ENCODE measurements at regions of chr1 and their contacts with region 1.

Region 1: GRCh38 chr1:146012737-146013403 is 8.7 kb downstream of the HJV start:
- DNase-seq: peak; percentile 39 to 87
- H3K4me3 ChIP-seq: no peak overlapping the region
- H3K27ac ChIP-seq: no peak overlapping the region
- H3K4me1 ChIP-seq: peaks cover 4 to 24% (median 13%) of the 10 kb centered on the region in 4 donors
- H3K27me3 ChIP-seq: peaks cover 0 to 7% (median 0%) of the 10 kb centered on the region in 3 donors
- CTCF ChIP-seq: peak in 5 of 7 experiments; percentile 44 to 76 (median 66)
- EP300 ChIP-seq: no peak
- POLR2A ChIP-seq: no peak

Region 2: GRCh38 chr1:145891587-145892485 is 121.0 kb before region 1 on chr1:
- intact Hi-C with region 1: no loop called
- DNase-seq: peak; percentile 97 to 98
- H3K4me3 ChIP-seq: peak overlapping the region in 1 of 4 donors; percentile 9
- H3K27ac ChIP-seq: peak overlapping the region; percentile 88 to 97 (median 96)
- H3K4me1 ChIP-seq: peaks cover 37 to 53% (median 41%) of the 10 kb centered on the region in 4 donors
- H3K27me3 ChIP-seq: no peaks in the 10 kb centered on the region
- CTCF ChIP-seq: peak in 6 of 7 experiments; percentile 81 to 99 (median 94)
- EP300 ChIP-seq: no peak
- POLR2A ChIP-seq: no peak

Region 3: GRCh38 chr1:145906954-145907753 is 105.7 kb before region 1 on chr1:
- intact Hi-C with region 1: loop called (anchors 10 kb)
- DNase-seq: no peak
- H3K4me3 ChIP-seq: no peak overlapping the region
- H3K27ac ChIP-seq: peak overlapping the region in 1 of 5 donors; percentile 10
- H3K4me1 ChIP-seq: peaks cover 5 to 8% (median 7%) of the 10 kb centered on the region in 4 donors
- H3K27me3 ChIP-seq: no peaks in the 10 kb centered on the region
- CTCF ChIP-seq: no peak
- EP300 ChIP-seq: no peak
- POLR2A ChIP-seq: no peak

Region 4: DNA sequence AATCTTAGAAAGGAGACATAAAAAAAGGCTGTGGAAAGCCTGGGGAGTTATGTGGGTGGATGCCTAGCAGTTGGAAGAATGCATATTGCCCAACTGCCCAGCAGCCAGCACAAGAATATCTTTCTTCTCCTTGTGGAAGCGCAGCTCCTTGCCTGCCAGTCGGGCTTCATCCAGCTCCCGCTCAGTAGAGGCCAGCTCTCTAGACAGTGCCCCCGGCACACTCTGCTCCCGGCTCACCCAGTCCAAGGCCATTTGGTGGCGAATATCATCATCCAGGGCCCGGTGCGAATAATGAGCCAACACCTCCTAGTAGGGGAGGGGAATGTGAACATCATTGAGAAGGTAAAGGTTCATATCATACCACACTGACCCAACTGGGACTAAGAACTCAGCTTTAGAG is 76.6 kb before region 1 on chr1:
- intact Hi-C with region 1: no loop called
- DNase-seq: no peak
- H3K4me3 ChIP-seq: no peak overlapping the region
- H3K27ac ChIP-seq: no peak overlapping the region
- H3K4me1 ChIP-seq: peaks cover 0 to 27% (median 7%) of the 10 kb centered on the region in 4 donors
- H3K27me3 ChIP-seq: no peaks in the 10 kb centered on the region
- CTCF ChIP-seq: no peak
- EP300 ChIP-seq: no peak
- POLR2A ChIP-seq: no peak

Region 5: GRCh38 chr1:145957443-145958319 is 55.2 kb before region 1 on chr1 and contains the start of gene LIX1L:
- intact Hi-C with region 1: no loop called
- DNase-seq: peak; percentile 96 to 99
- H3K4me3 ChIP-seq: peak within 1 kb of the TSS; percentile 82 to 96 (median 92)
- H3K27ac ChIP-seq: peak within 1 kb of the TSS; percentile 86 to 99 (median 94)
- H3K4me1 ChIP-seq: peaks cover 29 to 84% (median 71%) of the 10 kb centered on the region in 4 donors
- H3K27me3 ChIP-seq: peaks cover 0 to 14% (median 8%) of the 10 kb centered on the region in 3 donors
- CTCF ChIP-seq: peak in 1 of 7 experiments; percentile 7
- EP300 ChIP-seq: peak; percentile 45
- POLR2A ChIP-seq: peak in 2 of 4 donors; percentile 34 to 54
- total RNA-seq, gene LIX1L: 5.8 to 28.4 (median 14.0) TPM

Region 6: DNA sequence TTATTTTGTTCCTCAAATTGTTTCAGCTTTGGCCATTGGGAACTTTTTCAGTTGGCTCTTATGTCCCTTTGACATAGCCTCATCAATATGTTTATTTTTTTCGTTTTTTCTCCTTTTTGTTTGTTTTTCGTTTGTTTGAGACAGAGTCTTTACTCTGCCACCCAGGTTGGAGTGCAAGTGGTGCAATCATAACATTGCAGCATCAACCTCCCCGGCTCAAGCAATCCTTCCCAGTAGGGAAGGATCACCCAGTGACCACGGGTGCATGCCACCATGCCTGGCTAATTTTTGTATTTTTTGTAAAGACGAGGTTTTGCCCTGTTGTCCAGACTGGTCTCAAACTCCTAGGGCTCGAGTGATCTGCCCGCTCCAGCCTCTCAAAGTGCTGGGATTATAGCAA is 40.3 kb before region 1 on chr1:
- intact Hi-C with region 1: loop called (anchors 5 kb)
- DNase-seq: no peak
- H3K4me3 ChIP-seq: no peak overlapping the region
- H3K27ac ChIP-seq: no peak overlapping the region
- H3K4me1 ChIP-seq: peaks cover 5 to 8% (median 7%) of the 10 kb centered on the region in 4 donors
- H3K27me3 ChIP-seq: no peaks in the 10 kb centered on the region
- CTCF ChIP-seq: no peak
- EP300 ChIP-seq: no peak
- POLR2A ChIP-seq: no peak

Measured in stomach (tissue), 19 donors.